ENCODE measurements at regions of chr9 and their contacts with region 1.

Region 1: DNA sequence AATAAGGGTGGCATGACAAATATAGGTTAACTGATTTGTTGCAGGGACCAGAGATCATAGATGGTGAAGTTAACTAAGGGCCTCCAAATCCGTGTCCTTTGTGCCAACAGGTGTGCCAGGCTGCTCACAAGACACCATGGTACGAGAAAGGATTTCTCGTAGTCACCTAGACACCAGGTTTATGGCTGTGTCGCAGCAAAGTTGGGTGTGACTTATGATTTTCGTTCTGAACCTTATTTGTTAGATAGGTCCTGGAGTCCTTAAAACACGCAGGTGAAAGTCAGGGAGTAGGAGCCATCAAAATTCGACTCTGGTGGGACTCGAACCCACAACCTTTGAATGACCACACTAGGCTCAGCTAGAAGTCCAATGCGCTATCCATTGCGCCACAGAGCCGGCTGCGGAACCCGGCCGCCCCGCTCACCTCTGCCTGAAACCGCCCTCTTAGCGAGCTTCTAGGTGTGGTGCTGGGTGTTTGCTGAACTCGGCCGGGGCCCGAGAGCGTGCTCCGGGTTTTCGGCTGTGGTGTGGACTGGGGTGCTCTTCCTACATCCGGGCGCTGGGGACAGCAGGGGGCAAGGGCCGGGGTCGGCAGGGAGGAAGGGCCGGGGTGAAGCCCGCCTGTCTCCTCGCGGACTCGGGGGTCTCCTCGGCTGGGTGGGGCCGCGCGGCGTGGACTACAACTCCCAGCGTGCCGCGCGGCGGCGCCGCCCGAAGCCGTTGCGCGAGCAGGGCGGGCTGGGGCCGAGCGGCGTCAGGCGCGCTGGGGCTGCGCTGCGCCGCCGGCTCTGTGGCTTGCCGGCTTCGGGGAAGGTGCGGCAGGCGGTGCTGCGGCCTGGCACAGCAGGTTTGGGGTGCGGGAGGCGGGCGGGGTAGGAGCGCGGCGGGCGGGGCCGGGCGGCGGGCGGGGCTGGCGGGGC is at the start of gene SLC27A4:
- DNase-seq: peak; percentile 87 to 90 (median 90)
- ATAC-seq: peak; percentile 87 to 94 (median 90)
- H3K4me3 ChIP-seq: peak within 1 kb of the TSS; percentile 69 to 82 (median 74)
- H3K27ac ChIP-seq: peak within 1 kb of the TSS; percentile 57 to 64 (median 61)
- H3K4me1 ChIP-seq: peaks cover 0 to 6% (median 0%) of the 10 kb centered on the region in 4 donors
- H3K27me3 ChIP-seq: no peaks in the 10 kb centered on the region
- CTCF ChIP-seq: no peak
- POLR2A ChIP-seq: peak; percentile 56
- total RNA-seq, gene SLC27A4: 15.8 to 97.3 (median 24.1) TPM

Region 2: GRCh38 chr9:128296337-128297220 is 43.5 kb before region 1 on chr9:
- intact Hi-C with region 1: loop called (anchors 10 kb)
- DNase-seq: no peak
- ATAC-seq: peak; percentile 14 to 81 (median 46)
- H3K4me3 ChIP-seq: no peak overlapping the region
- H3K27ac ChIP-seq: peak overlapping the region; percentile 65 to 74 (median 69)
- H3K4me1 ChIP-seq: peaks cover 0 to 25% (median 10%) of the 10 kb centered on the region in 4 donors
- H3K27me3 ChIP-seq: no peaks in the 10 kb centered on the region
- CTCF ChIP-seq: no peak
- POLR2A ChIP-seq: peak; percentile 45